ENCODE measurements at regions of chr2 and their contacts with region 1.

Region 1: DNA sequence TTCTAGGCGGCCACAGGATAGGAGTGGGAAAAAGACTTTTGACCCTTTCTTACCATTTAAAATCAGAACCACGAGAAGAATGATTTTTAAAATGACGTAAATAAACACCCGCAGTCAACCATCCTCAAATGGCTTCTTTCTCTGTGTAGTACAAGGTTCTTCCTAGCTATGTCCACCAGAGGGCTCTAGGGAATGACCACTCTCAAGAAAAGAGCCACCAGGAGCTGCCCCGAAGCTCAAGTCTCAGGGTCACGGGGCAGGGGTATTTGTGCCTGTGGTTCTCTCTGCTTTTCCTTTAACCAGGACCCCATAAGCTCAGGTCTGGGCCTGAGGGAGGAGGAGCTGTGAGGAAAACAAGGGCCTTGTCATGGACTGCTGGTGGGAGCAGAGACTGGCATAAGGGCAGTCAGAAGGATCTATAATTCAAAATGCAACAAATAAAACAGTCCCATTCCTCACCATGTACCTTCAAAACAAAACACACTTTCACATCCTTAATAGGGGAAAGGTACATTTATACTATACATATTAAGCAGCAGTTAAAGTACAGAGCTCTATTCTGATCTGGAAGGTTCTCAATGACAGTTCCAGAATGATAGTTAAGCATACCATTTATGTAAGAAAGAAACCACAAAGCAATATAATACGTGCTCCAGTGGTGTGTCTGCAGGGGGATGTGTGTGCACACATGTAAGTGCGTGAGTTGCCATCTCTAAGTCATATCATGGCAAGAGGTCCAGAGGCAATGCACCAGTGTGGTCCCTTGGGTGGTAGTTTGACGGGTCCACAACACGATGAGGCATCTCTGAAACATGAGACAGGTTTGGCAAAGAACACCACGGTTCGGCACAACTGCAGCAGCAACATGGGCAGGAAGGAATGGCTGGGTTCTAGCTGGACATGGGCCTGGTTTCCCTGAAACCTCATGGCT is 18.6 kb downstream of the LYPD1 start:
- DNase-seq: no peak
- ATAC-seq: peak; percentile 83
- H3K4me3 ChIP-seq: no peak overlapping the region
- H3K27ac ChIP-seq: no peak overlapping the region
- H3K4me1 ChIP-seq: no peaks in the 10 kb centered on the region
- H3K27me3 ChIP-seq: no peaks in the 10 kb centered on the region; a peak in 1 of 4 replicates
- CTCF ChIP-seq: peak in 2 of 3 experiments; percentile 38 to 50; a peak in 3 of 6 replicates
- EP300 ChIP-seq: no peak
- POLR2A ChIP-seq: no peak
- RAD21 ChIP-seq: no peak

Region 2: GRCh38 chr2:132676999-132677398 is 25.6 kb after region 1 on chr2:
- CTCF ChIA-PET with region 1: no interaction called
- POLR2A ChIA-PET with region 1: no interaction called
- RAD21 ChIA-PET with region 1: no interaction called
- SMC1A ChIA-PET with region 1: no interaction called
- in situ Hi-C with region 1: no loop called
- intact Hi-C with region 1: loop called (anchors 1 kb)
- DNase-seq: no peak
- ATAC-seq: no peak
- H3K4me3 ChIP-seq: no peak overlapping the region
- H3K27ac ChIP-seq: no peak overlapping the region
- H3K4me1 ChIP-seq: no peaks in the 10 kb centered on the region
- H3K27me3 ChIP-seq: no peaks in the 10 kb centered on the region; a peak in 1 of 4 replicates
- CTCF ChIP-seq: peak in 2 of 3 experiments; percentile 16 to 34; a peak in 2 of 6 replicates
- EP300 ChIP-seq: no peak
- POLR2A ChIP-seq: no peak
- RAD21 ChIP-seq: 0 out of 2 replicates have a peak, but pooled peaks have one; percentile 16

Region 3: GRCh38 chr2:132692816-132693215 is 41.4 kb after region 1 on chr2:
- CTCF ChIA-PET with region 1: no interaction called
- POLR2A ChIA-PET with region 1: no interaction called
- RAD21 ChIA-PET with region 1: no interaction called
- SMC1A ChIA-PET with region 1: no interaction called
- in situ Hi-C with region 1: no loop called
- intact Hi-C with region 1: no loop called
- DNase-seq: no peak
- ATAC-seq: no peak
- H3K4me3 ChIP-seq: no peak overlapping the region
- H3K27ac ChIP-seq: no peak overlapping the region
- H3K4me1 ChIP-seq: no peaks in the 10 kb centered on the region
- H3K27me3 ChIP-seq: no peaks in the 10 kb centered on the region
- CTCF ChIP-seq: no peak
- EP300 ChIP-seq: no peak
- POLR2A ChIP-seq: no peak
- RAD21 ChIP-seq: no peak

Region 4: GRCh38 chr2:132849118-132849517 is 197.7 kb after region 1 on chr2:
- CTCF ChIA-PET with region 1: interaction called, 15 read pairs
- POLR2A ChIA-PET with region 1: no interaction called
- RAD21 ChIA-PET with region 1: interaction called, 7 read pairs
- SMC1A ChIA-PET with region 1: interaction called, 4 read pairs
- in situ Hi-C with region 1: no loop called
- intact Hi-C with region 1: no loop called
- DNase-seq: no peak
- ATAC-seq: no peak
- H3K4me3 ChIP-seq: no peak overlapping the region
- H3K27ac ChIP-seq: no peak overlapping the region
- H3K4me1 ChIP-seq: no peaks in the 10 kb centered on the region
- H3K27me3 ChIP-seq: no peaks in the 10 kb centered on the region; a peak in 1 of 4 replicates
- CTCF ChIP-seq: no peak
- EP300 ChIP-seq: no peak
- POLR2A ChIP-seq: no peak
- RAD21 ChIP-seq: no peak

Region 5: GRCh38 chr2:133844214-133844892 is 1193.0 kb after region 1 on chr2:
- CTCF ChIA-PET with region 1: interaction called, 3 read pairs
- POLR2A ChIA-PET with region 1: no interaction called
- RAD21 ChIA-PET with region 1: no interaction called
- SMC1A ChIA-PET with region 1: no interaction called
- in situ Hi-C with region 1: no loop called
- intact Hi-C with region 1: loop called (anchors 2 kb)
- DNase-seq: peak; percentile 5
- ATAC-seq: peak; percentile 94
- H3K4me3 ChIP-seq: no peak overlapping the region
- H3K27ac ChIP-seq: no peak overlapping the region
- H3K4me1 ChIP-seq: no peaks in the 10 kb centered on the region
- H3K27me3 ChIP-seq: no peaks in the 10 kb centered on the region; a peak in 1 of 4 replicates
- CTCF ChIP-seq: peak; percentile 84 to 91 (median 84)
- EP300 ChIP-seq: no peak
- POLR2A ChIP-seq: no peak
- RAD21 ChIP-seq: peak; percentile 87

Measured in GM12878 (cell line).